ENCODE measurements at regions of chr21 and their contacts with region 1.

Region 1: GRCh38 chr21:27225151-27225550 is 258.3 kb upstream of the ADAMTS5 start:
- DNase-seq: no peak
- H3K4me3 ChIP-seq: no peak overlapping the region; a peak in 1 of 4 replicates
- H3K27ac ChIP-seq: peak overlapping the region in 1 of 2 experiments; percentile 37; a peak in 1 of 4 replicates
- H3K4me1 ChIP-seq: no peaks in the 10 kb centered on the region; a peak in 2 of 4 replicates
- H3K27me3 ChIP-seq: no peaks in the 10 kb centered on the region
- CTCF ChIP-seq: no peak
- EP300 ChIP-seq: no peak
- RAD21 ChIP-seq: no peak

Region 2: DNA sequence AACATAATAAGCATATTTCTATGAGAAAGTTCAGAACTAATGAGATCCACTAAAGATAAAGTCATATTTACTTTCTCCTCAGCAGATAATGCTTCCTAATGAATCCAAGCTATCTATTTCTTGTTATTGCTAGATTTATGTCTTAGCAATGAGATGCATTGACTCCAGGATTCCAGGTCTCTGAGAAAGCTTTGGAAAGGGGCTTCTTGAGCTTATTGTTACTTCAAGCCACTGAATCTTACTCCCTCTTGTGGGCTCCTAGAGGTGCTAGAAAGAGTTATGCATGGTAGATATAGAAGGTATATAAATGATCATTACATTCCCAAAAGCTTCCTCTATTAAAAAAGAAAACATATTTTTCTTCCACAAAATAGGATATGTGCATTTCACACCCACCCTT is 11.8 kb before region 1 on chr21:
- CTCF ChIA-PET with region 1: interaction called, 13 read pairs
- POLR2A ChIA-PET with region 1: no interaction called
- DNase-seq: no peak
- H3K4me3 ChIP-seq: no peak overlapping the region
- H3K27ac ChIP-seq: no peak overlapping the region
- H3K4me1 ChIP-seq: no peaks in the 10 kb centered on the region; a peak in 1 of 4 replicates
- H3K27me3 ChIP-seq: no peaks in the 10 kb centered on the region
- CTCF ChIP-seq: peak; percentile 51
- EP300 ChIP-seq: 0 out of 4 replicates have a peak, but pooled peaks of 1 of the 2 experiments have one; percentile 23
- RAD21 ChIP-seq: peak; percentile 40